Activated CD8-positive, alpha-beta memory T cell treated with anti-CD3 and anti-CD28 coated beads, Interleukin-2, amount 10 ng/mL, durations not matched to agents 7 days and 5 days (primary cell): ENCODE measurements at regions of chr10 and their contacts with region 1.

Region 1: DNA sequence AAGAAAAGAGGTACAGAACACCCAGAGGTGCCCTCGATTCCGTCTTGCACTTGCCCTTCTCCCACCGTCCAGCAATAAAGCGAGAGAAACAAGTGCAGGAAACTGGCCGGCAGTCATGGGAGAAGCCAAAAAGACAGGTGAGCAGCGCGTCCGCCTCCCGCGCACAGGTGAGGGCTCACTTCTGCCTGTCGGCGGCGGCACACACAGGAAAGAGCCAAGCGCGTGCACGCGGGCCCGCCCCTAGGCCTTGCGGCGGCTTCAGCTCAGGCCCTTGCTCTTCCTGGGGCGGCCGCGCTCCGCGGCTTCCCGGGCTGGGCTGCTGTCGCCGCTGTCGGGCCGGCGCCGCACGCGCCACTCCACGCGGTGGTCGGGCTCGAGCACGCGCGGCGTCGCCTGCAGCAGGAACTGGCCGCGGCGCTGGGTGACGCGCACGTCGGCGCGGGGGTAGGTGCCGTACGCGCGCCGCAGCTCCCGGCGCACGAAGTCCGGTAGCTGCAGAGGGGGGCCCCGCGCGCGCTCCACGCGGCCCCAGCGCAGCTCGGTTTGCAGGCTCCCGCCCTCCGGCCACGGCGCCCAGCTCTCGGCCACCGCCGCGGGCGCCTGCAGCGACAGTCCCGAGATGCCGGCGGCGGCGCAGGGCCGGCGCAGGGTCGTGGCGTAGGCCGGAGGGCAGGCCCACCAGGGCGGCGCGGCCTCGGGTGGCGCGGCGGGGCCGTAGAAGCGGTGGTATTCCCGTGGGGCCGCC is 977 bp downstream of the C10orf95 start:
- DNase-seq: peak; percentile 92
- ATAC-seq: peak; percentile 79
- H3K4me3 Mint-ChIP-seq: peak overlapping the region; percentile 86
- H3K27ac Mint-ChIP-seq: peak overlapping the region; percentile 91
- H3K4me1 Mint-ChIP-seq: peaks cover 42% of the 10 kb centered on the region
- H3K27me3 Mint-ChIP-seq: no peaks in the 10 kb centered on the region

Region 2: GRCh38 chr10:102394079-102394800 is 56.1 kb before region 1 on chr10:
- CTCF ChIA-PET with region 1: interaction called, 21 read pairs
- DNase-seq: peak; percentile 99
- ATAC-seq: peak; percentile 88
- H3K4me3 Mint-ChIP-seq: peak overlapping the region; percentile 84
- H3K27ac Mint-ChIP-seq: peak overlapping the region; percentile 90
- H3K4me1 Mint-ChIP-seq: peaks cover 38% of the 10 kb centered on the region
- H3K27me3 Mint-ChIP-seq: no peaks in the 10 kb centered on the region

Region 3: GRCh38 chr10:102432162-102432950 is 18.0 kb before region 1 on chr10 and contains the start of gene CUEDC2:
- CTCF ChIA-PET with region 1: interaction called, 14 read pairs
- DNase-seq: peak; percentile 99
- ATAC-seq: peak; percentile 95
- H3K4me3 Mint-ChIP-seq: peak within 1 kb of the TSS; percentile 91
- H3K27ac Mint-ChIP-seq: peak within 1 kb of the TSS; percentile 95
- H3K4me1 Mint-ChIP-seq: peaks cover 53% of the 10 kb centered on the region
- H3K27me3 Mint-ChIP-seq: no peaks in the 10 kb centered on the region
- total RNA-seq, gene CUEDC2: 73.5 to 78.2 TPM

Region 4: DNA sequence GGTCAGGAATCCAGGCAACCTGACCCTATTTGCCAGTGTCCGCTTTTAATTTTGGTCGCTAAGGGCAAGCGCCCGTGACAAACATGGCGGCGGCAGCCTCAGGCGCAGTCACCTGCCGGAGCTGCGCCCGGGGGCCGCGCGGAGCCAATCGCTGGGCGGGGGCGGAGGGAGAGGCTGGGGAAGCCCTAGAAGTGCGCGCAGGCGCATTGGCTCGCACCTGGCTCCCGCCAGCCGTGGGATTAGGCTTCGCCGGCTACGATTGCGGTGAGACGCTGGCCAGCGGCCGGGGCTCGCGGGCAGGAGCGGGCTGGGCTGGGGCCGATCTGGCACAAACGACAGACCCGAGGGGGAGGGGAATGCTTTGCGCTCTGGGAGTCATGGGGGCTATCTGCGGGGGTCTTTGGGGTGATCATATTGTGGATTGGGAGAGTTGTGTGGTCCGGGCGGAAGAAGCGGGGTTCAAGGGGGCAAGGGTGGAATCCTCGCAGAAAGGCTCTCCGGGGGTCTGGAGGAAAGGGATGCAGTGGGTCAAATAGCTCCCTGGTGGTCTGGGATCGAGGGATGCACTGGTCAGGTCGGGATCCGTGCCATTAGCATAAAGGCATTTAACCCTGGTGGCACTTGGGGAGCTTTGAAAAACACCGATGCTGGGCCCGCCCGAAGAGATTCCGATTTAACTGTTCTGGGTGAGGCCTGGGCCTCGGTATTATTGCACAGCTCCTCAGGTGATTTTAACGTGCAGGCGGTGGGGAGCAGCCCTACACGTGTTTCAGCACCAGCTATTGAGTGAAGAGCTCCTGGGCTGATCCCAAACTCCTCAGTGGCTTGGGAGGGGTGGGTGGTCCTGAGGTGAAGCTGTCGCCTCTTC is 11.1 kb after region 1 on chr10:
- CTCF ChIA-PET with region 1: interaction called, 23 read pairs
- DNase-seq: peak; percentile 94
- ATAC-seq: peak; percentile 99
- H3K4me3 Mint-ChIP-seq: peak overlapping the region; percentile 82
- H3K27ac Mint-ChIP-seq: peak overlapping the region; percentile 79
- H3K4me1 Mint-ChIP-seq: peaks cover 29% of the 10 kb centered on the region
- H3K27me3 Mint-ChIP-seq: no peaks in the 10 kb centered on the region